Activated B cell treated with CpG ODN at 0.5 μM for 24 hours (primary cell): ENCODE measurements at regions of chr1 and their contacts with region 1.

Region 1: GRCh38 chr1:64663668-64664067 is 81.2 kb upstream of the RAVER2 start:
- DNase-seq: no peak
- ATAC-seq: no peak
- H3K4me3 Mint-ChIP-seq: no peak overlapping the region
- H3K27ac Mint-ChIP-seq: no peak overlapping the region
- H3K4me1 Mint-ChIP-seq: no peaks in the 10 kb centered on the region
- H3K27me3 Mint-ChIP-seq: peaks cover 4% of the 10 kb centered on the region
- CTCF ChIP-seq: no peak

Region 2: GRCh38 chr1:64675718-64676345 is 12.2 kb after region 1 on chr1:
- CTCF ChIA-PET with region 1: interaction called, 29 read pairs
- POLR2A ChIA-PET with region 1: no interaction called
- intact Hi-C with region 1: no loop called
- DNase-seq: no peak
- ATAC-seq: no peak
- H3K4me3 Mint-ChIP-seq: no peak overlapping the region
- H3K27ac Mint-ChIP-seq: no peak overlapping the region
- H3K4me1 Mint-ChIP-seq: no peaks in the 10 kb centered on the region
- H3K27me3 Mint-ChIP-seq: peaks cover 5% of the 10 kb centered on the region
- CTCF ChIP-seq: peak; percentile 93